ENCODE measurements at regions of chr12 and their contacts with region 1.

Region 1: GRCh38 chr12:6752921-6753771 is at the start of gene MLF2:
- DNase-seq: peak; percentile 96 to 100
- H3K4me3 ChIP-seq: peak within 1 kb of the TSS; percentile 72 to 91 (median 88)
- H3K27ac ChIP-seq: peak within 1 kb of the TSS; percentile 94
- H3K4me1 ChIP-seq: peaks cover 0 to 4% (median 3%) of the 10 kb centered on the region in 4 experiments; a peak in 5 of 7 replicates
- H3K27me3 ChIP-seq: no peaks in the 10 kb centered on the region
- CTCF ChIP-seq: peak in 1 of 3 experiments; percentile 85; a peak in 1 of 4 replicates
- EP300 ChIP-seq: no peak
- POLR2A ChIP-seq: peak; percentile 61 to 71
- RAD21 ChIP-seq: no peak
- total RNA-seq, gene MLF2: 229 and 232 TPM in 2 replicates

Region 2: DNA sequence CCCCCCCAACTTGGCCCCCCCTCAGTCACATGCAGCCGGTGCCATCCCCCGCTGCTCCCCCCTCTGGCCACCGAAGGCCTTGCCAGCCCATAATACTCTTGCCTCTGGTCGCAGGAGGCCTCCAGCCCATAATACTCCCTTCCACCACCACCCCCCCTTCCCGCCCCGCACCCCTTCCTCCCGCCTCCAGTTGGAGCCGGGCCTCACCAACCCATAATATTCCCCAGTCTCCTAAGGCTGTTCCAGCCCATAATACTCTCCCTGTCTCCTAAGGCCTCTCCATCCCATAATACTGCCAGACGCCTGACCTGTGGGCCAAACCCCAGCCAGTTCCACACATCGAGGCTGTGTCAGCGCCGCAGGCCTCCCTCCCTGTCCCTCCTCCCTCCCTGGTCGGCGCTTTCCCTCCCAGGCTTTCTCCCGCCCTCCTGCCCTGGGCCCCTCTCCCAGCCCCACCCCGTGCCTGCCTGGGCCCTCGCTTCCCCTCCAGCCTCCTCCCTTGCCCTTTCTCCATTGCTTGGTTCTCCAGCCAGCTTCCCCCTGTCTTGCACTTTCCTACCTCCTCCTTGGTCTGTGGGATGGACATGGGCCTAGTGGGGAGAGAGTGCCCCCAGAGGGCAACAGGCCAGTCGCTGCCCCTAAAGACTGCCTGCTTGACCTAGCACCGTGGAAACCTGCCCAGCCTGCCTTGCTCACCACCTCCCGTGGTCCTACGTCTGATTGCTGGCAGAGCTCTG is 139.2 kb before region 1 on chr12:
- CTCF ChIA-PET with region 1: interaction called, 4 read pairs
- POLR2A ChIA-PET with region 1: interaction called, 11 read pairs
- DNase-seq: peak; percentile 82 to 86
- H3K4me3 ChIP-seq: peak overlapping the region in 2 of 4 experiments; percentile 0 to 32; a peak in 1 of 8 replicates
- H3K27ac ChIP-seq: peak overlapping the region; percentile 44; the same call in 1 of the 2 replicates
- H3K4me1 ChIP-seq: peaks cover 15 to 21% (median 17%) of the 10 kb centered on the region in 4 experiments
- H3K27me3 ChIP-seq: peaks cover 0 to 3% (median 1%) of the 10 kb centered on the region in 4 experiments; a peak in 2 of 7 replicates
- CTCF ChIP-seq: peak; percentile 27 to 63 (median 34); a peak in 3 of 4 replicates
- EP300 ChIP-seq: no peak
- POLR2A ChIP-seq: no peak
- RAD21 ChIP-seq: peak in 1 of 2 experiments; percentile 10; a peak in 1 of 4 replicates

Region 3: GRCh38 chr12:6735448-6736191 is 17.5 kb before region 1 on chr12:
- CTCF ChIA-PET with region 1: interaction called, 22 read pairs
- POLR2A ChIA-PET with region 1: interaction called, 11 read pairs
- DNase-seq: peak in 1 of 2 experiments; percentile 62
- H3K4me3 ChIP-seq: no peak overlapping the region
- H3K27ac ChIP-seq: no peak overlapping the region
- H3K4me1 ChIP-seq: peaks cover 0 to 5% (median 0%) of the 10 kb centered on the region in 4 experiments; a peak in 1 of 7 replicates
- H3K27me3 ChIP-seq: no peaks in the 10 kb centered on the region
- CTCF ChIP-seq: peak; percentile 62 to 63 (median 63)
- EP300 ChIP-seq: no peak
- POLR2A ChIP-seq: no peak
- RAD21 ChIP-seq: peak; percentile 62 to 73

Region 4: GRCh38 chr12:6778574-6779550 is 25.7 kb after region 1 on chr12:
- CTCF ChIA-PET with region 1: interaction called, 427 read pairs
- POLR2A ChIA-PET with region 1: interaction called, 151 read pairs
- DNase-seq: peak; percentile 82 to 96
- H3K4me3 ChIP-seq: peak overlapping the region; percentile 29 to 67 (median 54)
- H3K27ac ChIP-seq: no peak overlapping the region
- H3K4me1 ChIP-seq: peaks cover 5 to 18% (median 13%) of the 10 kb centered on the region in 4 experiments
- H3K27me3 ChIP-seq: peaks cover 0 to 23% (median 17%) of the 10 kb centered on the region in 4 experiments; a peak in 5 of 7 replicates
- CTCF ChIP-seq: peak in 2 of 3 experiments; percentile 95 to 98; a peak in 3 of 4 replicates
- EP300 ChIP-seq: peak in 1 of 2 experiments; percentile 17; a peak in 1 of 3 replicates
- POLR2A ChIP-seq: no peak
- RAD21 ChIP-seq: peak; percentile 96 to 99

Region 5: DNA sequence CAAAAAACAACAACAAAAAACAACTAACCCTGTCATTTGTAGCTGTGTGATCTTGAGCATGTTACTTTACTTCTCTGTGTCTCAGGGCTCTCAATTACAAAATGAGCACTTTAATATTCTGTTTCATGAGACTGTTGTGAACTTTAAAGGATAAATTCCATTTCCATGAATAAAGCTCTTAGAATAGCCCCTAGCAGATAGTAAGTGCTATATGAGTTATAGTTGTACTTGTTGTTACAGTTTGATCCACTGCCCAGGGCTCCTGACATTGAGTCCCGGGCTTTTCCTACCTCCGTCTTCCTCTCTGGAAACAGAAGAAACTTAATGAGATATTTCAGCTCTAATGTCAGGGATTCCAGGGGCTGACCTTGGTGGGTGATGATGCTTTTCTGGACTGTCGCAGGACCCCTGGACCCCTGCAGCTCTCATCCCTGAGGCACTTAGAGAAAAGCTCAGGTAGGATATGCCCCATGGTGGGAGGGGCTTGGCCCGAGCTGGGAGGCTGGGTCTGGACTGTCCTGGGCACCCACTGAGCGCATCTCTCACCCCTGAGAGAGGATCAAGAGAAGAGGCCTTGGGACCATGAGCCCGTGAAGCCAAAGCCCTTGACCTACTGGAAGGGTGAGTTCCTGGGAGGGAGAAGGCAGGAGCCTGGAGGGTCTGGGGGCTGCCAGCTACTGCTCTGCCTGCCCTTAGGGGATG is 80.2 kb after region 1 on chr12:
- CTCF ChIA-PET with region 1: interaction called, 296 read pairs
- POLR2A ChIA-PET with region 1: interaction called, 17 read pairs
- DNase-seq: no peak
- H3K4me3 ChIP-seq: no peak overlapping the region
- H3K27ac ChIP-seq: no peak overlapping the region
- H3K4me1 ChIP-seq: peaks cover 0 to 8% (median 4%) of the 10 kb centered on the region in 4 experiments; a peak in 5 of 7 replicates
- H3K27me3 ChIP-seq: no peaks in the 10 kb centered on the region
- CTCF ChIP-seq: no peak
- EP300 ChIP-seq: no peak
- POLR2A ChIP-seq: no peak
- RAD21 ChIP-seq: no peak

Region 6: DNA sequence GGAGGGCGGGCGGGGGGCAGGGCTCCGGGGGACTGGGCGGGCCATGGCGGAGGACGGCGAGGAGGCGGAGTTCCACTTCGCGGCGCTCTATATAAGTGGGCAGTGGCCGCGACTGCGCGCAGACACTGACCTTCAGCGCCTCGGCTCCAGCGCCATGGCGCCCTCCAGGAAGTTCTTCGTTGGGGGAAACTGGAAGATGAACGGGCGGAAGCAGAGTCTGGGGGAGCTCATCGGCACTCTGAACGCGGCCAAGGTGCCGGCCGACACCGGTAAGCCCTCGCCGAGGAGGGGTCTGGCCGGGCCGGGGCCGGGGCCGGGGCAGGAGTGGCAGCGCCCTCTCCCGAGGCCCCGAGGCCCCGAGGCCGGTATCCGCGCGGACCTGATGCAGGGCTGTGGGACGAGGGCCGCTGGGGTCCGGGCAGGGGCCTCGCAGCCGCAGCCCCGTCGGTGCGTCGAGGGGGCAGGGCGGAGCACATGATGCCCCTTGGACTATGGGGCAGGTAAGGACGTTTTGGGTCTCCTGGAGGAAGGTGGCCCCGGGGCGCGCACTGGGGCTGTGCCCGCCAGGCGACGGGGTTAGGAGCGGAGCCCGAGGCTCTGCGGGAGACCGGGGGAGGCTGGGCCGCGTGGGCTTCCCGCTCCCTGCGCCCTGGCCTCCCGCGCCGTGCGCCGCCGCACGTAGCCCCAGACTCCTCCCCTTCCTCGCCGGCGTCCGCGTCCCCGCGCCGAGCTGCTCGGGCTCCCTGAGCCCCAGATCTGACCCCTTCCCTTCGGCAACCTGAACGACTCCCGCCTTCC is 114.5 kb after region 1 on chr12 and contains the start of gene TPI1:
- CTCF ChIA-PET with region 1: interaction called, 8 read pairs
- POLR2A ChIA-PET with region 1: interaction called, 18 read pairs
- DNase-seq: peak in 1 of 2 experiments; percentile 67
- H3K4me3 ChIP-seq: peak within 1 kb of the TSS; percentile 84 to 98 (median 86)
- H3K27ac ChIP-seq: peak within 1 kb of the TSS; percentile 71
- H3K4me1 ChIP-seq: peaks cover 7 to 48% (median 25%) of the 10 kb centered on the region in 4 experiments
- H3K27me3 ChIP-seq: no peaks in the 10 kb centered on the region
- CTCF ChIP-seq: no peak
- EP300 ChIP-seq: no peak
- POLR2A ChIP-seq: peak in 1 of 2 experiments; percentile 97; a peak in 2 of 3 replicates
- RAD21 ChIP-seq: no peak
- total RNA-seq, gene TPI1: 902 and 910 TPM in 2 replicates

Region 7: DNA sequence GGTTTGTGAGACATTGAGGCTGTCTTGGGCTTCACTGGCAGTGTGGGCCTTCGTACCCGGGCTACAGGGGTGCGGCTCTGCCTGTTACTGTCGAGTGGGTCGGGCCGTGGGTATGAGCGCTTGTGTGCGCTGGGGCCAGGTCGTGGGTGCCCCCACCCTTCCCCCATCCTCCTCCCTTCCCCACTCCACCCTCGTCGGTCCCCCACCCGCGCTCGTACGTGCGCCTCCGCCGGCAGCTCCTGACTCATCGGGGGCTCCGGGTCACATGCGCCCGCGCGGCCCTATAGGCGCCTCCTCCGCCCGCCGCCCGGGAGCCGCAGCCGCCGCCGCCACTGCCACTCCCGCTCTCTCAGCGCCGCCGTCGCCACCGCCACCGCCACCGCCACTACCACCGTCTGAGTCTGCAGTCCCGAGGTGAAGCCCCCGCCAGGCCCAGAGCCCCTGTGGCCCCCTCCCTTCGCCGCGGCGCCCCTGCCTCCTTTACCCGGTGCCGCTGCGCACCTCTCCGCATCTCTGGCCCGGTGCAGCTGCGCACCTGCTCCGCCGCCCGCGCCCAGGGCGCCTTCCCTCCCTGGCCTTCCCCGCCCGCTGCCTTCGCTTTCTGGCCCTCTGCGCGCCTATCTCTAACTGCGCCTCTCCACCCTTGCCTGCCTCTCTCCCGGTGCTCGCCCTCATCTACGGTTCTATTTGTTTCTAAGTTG is 161.2 kb after region 1 on chr12 and contains the start of gene ENO2:
- CTCF ChIA-PET with region 1: no interaction called
- POLR2A ChIA-PET with region 1: no interaction called
- DNase-seq: peak in 1 of 2 experiments; percentile 72
- H3K4me3 ChIP-seq: peak within 1 kb of the TSS; percentile 67 to 86 (median 78)
- H3K27ac ChIP-seq: 0 out of 2 replicates have a peak within 1 kb of the TSS, but pooled peaks have one; percentile 26
- H3K4me1 ChIP-seq: peaks cover 0 to 18% (median 9%) of the 10 kb centered on the region in 4 experiments; a peak in 6 of 7 replicates
- H3K27me3 ChIP-seq: no peaks in the 10 kb centered on the region
- CTCF ChIP-seq: no peak
- EP300 ChIP-seq: no peak
- POLR2A ChIP-seq: no peak
- RAD21 ChIP-seq: no peak
- total RNA-seq, gene ENO2: 90.9 and 92.4 TPM in 2 replicates

Measured in H1 (cell line).